Activated CD4-positive, alpha-beta memory T cell treated with anti-CD3 and anti-CD28 coated beads for 36 hours (primary cell): ENCODE measurements at regions of chr19 and their contacts with region 1.

Region 1: GRCh38 chr19:41144403-41144802 is 30.2 kb downstream of the CYP2F1 start:
- DNase-seq: peak; percentile 91
- H3K4me3 Mint-ChIP-seq: peak overlapping the region; percentile 18
- H3K27ac Mint-ChIP-seq: peak overlapping the region; percentile 59
- H3K4me1 Mint-ChIP-seq: no peaks in the 10 kb centered on the region
- H3K27me3 Mint-ChIP-seq: peaks cover 7% of the 10 kb centered on the region

Region 2: DNA sequence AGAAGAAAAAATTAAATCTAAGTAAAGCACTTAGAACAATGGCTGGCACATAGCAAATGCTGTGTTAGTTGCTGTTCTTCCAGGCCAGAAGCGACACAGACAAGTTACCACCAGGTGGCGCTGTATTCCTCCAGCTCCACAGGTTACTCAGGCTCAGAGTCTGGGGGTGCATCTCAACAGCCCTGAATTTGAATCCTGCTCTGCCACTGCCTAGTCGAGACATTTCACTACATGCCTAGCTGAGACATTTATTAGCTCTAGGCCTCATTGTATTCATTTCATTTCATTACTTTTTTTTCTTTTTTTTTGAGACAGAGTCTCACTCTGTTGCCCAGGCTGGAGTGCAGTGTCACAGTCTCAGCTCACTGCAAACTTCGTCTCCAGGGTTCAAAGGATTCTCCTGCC is 169.8 kb before region 1 on chr19:
- CTCF ChIA-PET with region 1: interaction called, 22 read pairs
- POLR2A ChIA-PET with region 1: no interaction called
- intact Hi-C with region 1: loop called (anchors 1 kb)
- DNase-seq: peak; percentile 83
- H3K4me3 Mint-ChIP-seq: no peak overlapping the region
- H3K27ac Mint-ChIP-seq: no peak overlapping the region
- H3K4me1 Mint-ChIP-seq: peaks cover 26% of the 10 kb centered on the region
- H3K27me3 Mint-ChIP-seq: peaks cover 6% of the 10 kb centered on the region

Region 3: GRCh38 chr19:41123716-41124294 is 20.6 kb before region 1 on chr19:
- CTCF ChIA-PET with region 1: interaction called, 29 read pairs
- POLR2A ChIA-PET with region 1: no interaction called
- intact Hi-C with region 1: loop called (anchors 2 kb)
- DNase-seq: no peak
- H3K4me3 Mint-ChIP-seq: no peak overlapping the region
- H3K27ac Mint-ChIP-seq: no peak overlapping the region
- H3K4me1 Mint-ChIP-seq: peaks cover 23% of the 10 kb centered on the region
- H3K27me3 Mint-ChIP-seq: no peaks in the 10 kb centered on the region

Region 4: GRCh38 chr19:41133260-41133659 is 11.1 kb before region 1 on chr19:
- CTCF ChIA-PET with region 1: interaction called, 29 read pairs
- POLR2A ChIA-PET with region 1: no interaction called
- intact Hi-C with region 1: no loop called
- DNase-seq: no peak
- H3K4me3 Mint-ChIP-seq: no peak overlapping the region
- H3K27ac Mint-ChIP-seq: no peak overlapping the region
- H3K4me1 Mint-ChIP-seq: peaks cover 6% of the 10 kb centered on the region
- H3K27me3 Mint-ChIP-seq: no peaks in the 10 kb centered on the region